WTC11 (cell line): ENCODE measurements at regions of chr2 and their contacts with region 1.

Region 1: GRCh38 chr2:23188658-23189057 is 196.3 kb upstream of the KLHL29 start:
- DNase-seq: no peak
- ATAC-seq: no peak
- H3K4me3 Mint-ChIP-seq: no peak overlapping the region
- H3K27ac Mint-ChIP-seq: no peak overlapping the region
- H3K4me1 Mint-ChIP-seq: no peaks in the 10 kb centered on the region
- H3K27me3 Mint-ChIP-seq: no peaks in the 10 kb centered on the region
- CTCF ChIP-seq: no peak

Region 2: DNA sequence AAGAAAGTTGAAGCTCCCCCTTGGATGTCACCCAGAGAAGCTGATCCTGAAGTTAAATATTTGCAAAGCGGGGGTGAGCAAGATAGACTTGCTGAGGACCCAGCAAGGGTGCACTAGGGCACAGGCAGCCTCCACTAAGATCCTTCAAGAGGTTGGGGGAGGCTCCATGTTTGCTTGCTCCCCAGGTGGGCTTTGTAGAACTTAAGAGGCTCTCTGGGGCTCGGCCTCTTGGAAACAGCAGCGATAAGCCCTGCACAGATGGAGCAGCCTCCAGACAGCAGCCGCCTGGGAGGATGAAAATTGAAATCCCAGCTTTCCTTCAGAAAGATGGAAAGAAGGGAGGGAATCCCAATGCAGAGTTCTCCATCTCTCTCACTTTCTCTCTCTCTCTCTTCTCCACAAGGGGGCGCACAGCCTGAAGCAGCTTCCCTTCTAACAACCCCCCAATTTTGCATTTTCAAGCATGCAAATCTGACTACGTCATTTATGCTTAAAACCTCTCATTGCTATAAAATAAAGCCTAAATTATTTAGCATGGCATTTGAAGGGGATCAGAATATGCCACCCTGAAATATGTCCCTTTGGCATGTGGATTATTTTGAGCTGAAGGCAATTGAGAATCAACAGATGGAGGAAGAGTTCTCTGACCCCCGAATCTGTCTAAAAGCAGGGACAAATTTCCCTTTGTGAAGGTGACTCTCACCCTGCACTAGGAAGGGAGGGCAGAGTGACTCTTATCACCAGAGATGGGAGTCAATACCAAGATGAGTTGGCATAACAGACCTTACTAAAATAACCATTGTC is 10.7 kb after region 1 on chr2:
- CTCF ChIA-PET with region 1: interaction called, 11 read pairs
- POLR2A ChIA-PET with region 1: no interaction called
- DNase-seq: peak; percentile 16
- ATAC-seq: peak; percentile 38
- H3K4me3 Mint-ChIP-seq: no peak overlapping the region
- H3K27ac Mint-ChIP-seq: no peak overlapping the region
- H3K4me1 Mint-ChIP-seq: no peaks in the 10 kb centered on the region
- H3K27me3 Mint-ChIP-seq: no peaks in the 10 kb centered on the region
- CTCF ChIP-seq: peak; percentile 49